OCI-LY7 (cell line): ENCODE measurements at regions of chr18 and their contacts with region 1.

Region 1: DNA sequence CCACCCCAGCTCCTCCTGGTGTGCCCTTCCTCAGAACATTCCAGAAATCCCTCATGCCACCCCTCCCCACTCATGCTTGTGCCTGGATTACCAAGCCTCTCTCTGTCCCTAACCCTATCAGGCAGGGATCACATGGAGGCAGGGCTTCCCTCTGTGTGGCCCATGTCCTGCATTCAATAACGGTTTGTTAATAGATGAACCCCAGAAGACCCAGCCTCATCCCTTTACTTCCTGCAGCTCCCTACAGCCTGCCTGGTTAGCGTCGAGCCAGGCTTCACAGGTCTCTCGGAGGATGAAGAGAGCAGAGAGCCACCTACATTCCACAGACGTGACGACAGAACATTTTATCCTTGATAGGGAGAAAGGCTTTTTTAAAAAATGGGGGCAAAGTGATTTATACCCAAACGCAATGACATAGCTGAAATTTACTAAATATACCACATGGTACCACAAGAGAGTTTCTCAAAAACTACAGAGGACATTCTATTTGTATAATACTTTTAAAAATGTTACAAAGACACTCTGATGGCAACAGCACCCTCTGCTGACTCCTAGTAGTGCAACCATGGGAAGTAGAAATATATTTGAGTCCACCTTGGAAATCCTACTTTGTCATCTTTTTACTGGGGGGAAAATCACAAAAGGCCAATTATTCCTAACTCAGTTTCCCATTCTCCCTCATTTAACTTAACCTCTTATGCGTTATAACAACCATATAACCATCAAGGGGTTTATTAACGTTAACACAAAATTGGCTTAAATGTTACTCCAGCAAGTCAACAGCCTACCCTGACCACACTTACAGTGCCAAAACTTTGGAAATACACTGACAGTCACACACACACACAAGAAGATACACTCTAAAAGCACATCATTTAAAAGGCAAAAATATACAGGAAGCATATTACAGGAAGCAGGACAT is 30.7 kb downstream of the FBXO15 start:
- DNase-seq: peak; percentile 41
- H3K4me3 ChIP-seq: no peak overlapping the region
- H3K27ac ChIP-seq: no peak overlapping the region
- H3K4me1 ChIP-seq: no peaks in the 10 kb centered on the region
- CTCF ChIP-seq: peak; percentile 74

Region 2: DNA sequence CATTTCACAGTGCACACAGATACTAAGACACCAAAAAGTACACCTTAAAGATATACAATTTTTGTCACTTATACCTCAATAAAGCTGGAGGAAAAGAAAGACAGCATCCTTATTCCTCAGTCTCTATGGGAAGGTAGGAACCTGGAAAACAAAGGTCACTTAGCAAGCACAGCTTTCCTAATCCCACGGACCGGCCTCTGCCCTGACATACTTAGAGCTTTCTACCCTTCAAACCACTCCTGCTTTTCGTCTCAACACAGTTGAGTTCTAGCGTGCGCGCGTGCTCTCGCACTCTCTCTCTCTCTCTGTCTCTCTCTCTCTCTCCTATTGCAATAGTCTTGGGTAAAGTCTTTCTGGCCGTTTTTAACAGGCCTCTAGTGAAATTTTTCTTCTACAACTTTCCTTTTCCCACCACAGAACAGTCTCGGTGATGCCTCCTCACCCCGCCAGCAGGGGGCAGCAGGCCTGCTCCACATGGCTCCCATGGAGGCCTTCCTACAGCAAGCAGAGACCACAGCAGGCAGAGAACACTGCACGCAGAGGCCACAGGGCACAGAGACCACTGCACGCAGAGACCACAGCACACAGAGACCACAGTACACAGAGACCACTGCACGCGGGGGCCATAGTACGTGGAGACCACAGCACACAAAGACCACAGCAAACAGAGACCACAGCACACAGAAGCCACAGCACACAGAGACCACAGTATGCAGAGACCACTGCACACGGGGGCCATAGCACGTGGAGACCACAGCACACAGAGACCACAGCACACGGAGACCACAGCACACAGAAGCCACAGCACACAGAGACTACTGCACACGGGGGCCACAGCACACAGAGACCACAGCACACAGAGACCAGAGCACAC is 76.2 kb before region 1 on chr18:
- CTCF ChIA-PET with region 1: no interaction called
- POLR2A ChIA-PET with region 1: interaction called, 4 read pairs
- intact Hi-C with region 1: loop called (anchors 1 kb)
- DNase-seq: peak; percentile 63
- H3K4me3 ChIP-seq: no peak overlapping the region
- H3K27ac ChIP-seq: no peak overlapping the region
- H3K4me1 ChIP-seq: no peaks in the 10 kb centered on the region
- CTCF ChIP-seq: peak; percentile 74